ENCODE measurements at regions of chr5 and their contacts with region 1.

Region 1: DNA sequence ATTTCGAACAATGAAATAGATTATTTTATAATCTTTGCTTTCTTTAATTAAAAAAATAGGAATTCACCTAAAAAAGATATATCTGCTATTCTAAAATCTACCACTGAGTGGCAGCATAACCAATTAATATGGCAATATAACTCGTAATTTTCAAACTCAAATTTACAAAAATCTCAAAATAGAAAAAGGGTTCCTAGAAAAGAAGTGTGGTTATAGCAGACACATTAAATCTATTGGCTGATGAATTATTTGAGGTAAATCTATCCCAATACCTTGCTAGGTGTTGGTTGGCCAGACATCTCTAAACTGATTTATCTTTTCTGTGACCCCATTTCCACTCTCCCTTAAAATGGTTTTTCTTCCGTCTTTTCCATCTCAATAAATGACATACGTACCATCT is 30.2 kb upstream of the NRG2 start:
- DNase-seq: peak; percentile 31
- H3K4me3 ChIP-seq: no peak overlapping the region
- H3K27ac ChIP-seq: no peak overlapping the region
- H3K4me1 ChIP-seq: no peaks in the 10 kb centered on the region
- H3K27me3 ChIP-seq: peaks cover 11 to 31% of the 10 kb centered on the region in 2 experiments
- CTCF ChIP-seq: peak in 1 of 2 donors; percentile 28
- POLR2A ChIP-seq: no peak

Region 2: GRCh38 chr5:140054086-140054689 is 19.1 kb before region 1 on chr5:
- CTCF ChIA-PET with region 1: interaction called, 17 read pairs
- POLR2A ChIA-PET with region 1: no interaction called
- dilution Hi-C with region 1: no loop called
- intact Hi-C with region 1: no loop called
- DNase-seq: peak; percentile 94
- H3K4me3 ChIP-seq: peak overlapping the region in 1 of 3 experiments; percentile 44
- H3K27ac ChIP-seq: no peak overlapping the region
- H3K4me1 ChIP-seq: peaks cover 16% of the 10 kb centered on the region
- H3K27me3 ChIP-seq: peaks cover 13 to 31% of the 10 kb centered on the region in 2 experiments
- CTCF ChIP-seq: no peak
- POLR2A ChIP-seq: no peak

Region 3: GRCh38 chr5:140131967-140132409 is 58.7 kb after region 1 on chr5:
- CTCF ChIA-PET with region 1: interaction called, 11 read pairs
- POLR2A ChIA-PET with region 1: no interaction called
- dilution Hi-C with region 1: no loop called
- intact Hi-C with region 1: no loop called
- DNase-seq: peak; percentile 71
- H3K4me3 ChIP-seq: no peak overlapping the region
- H3K27ac ChIP-seq: no peak overlapping the region
- H3K4me1 ChIP-seq: peaks cover 14% of the 10 kb centered on the region
- H3K27me3 ChIP-seq: no peaks in the 10 kb centered on the region
- CTCF ChIP-seq: no peak
- POLR2A ChIP-seq: no peak

Region 4: GRCh38 chr5:140357726-140358093 is 284.4 kb after region 1 on chr5:
- CTCF ChIA-PET with region 1: interaction called, 4 read pairs
- POLR2A ChIA-PET with region 1: no interaction called
- dilution Hi-C with region 1: no loop called
- intact Hi-C with region 1: loop called (anchors 5 kb)
- DNase-seq: peak; percentile 88
- H3K4me3 ChIP-seq: no peak overlapping the region
- H3K27ac ChIP-seq: no peak overlapping the region
- H3K4me1 ChIP-seq: no peaks in the 10 kb centered on the region
- H3K27me3 ChIP-seq: no peaks in the 10 kb centered on the region
- CTCF ChIP-seq: peak; percentile 94 to 97
- POLR2A ChIP-seq: no peak